OCI-LY7 (cell line): ENCODE measurements at regions of chr22 and their contacts with region 1.

Region 1: DNA sequence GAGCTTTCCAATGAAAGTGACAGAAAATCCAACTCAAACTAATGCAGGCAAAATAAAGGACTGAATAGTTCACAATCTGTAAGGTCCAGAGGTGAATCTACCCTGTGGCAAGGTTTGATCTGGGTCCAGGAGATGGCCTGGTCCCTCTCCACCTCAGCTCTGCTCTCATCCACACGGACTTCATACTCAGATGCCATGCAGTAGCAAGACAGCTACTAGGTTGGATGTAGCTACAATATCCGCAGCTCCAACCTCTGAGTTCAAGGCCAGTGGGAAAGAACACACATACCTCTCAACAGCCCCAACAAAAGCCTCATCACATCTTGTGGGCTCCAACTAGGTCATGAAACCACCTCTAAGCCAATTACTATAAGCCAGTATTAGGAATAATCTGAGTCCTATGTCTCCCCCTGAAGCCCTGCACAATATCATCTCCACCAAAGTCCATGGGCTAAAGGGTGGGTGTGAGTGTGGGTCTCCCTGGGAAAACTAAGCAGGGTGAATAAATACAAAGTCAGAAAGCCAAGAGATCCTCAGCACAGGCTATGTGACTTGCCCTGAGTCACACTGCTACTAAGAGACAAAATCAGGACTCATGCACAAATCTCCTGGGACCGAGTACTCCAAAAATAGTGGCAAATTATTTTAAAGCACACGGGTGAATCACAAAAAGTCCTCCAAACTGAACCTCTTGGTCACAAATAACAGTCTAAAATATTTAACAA is 78.8 kb downstream of the LARGE1 start:
- DNase-seq: peak; percentile 76
- H3K4me3 ChIP-seq: peak overlapping the region; percentile 60
- H3K27ac ChIP-seq: peak overlapping the region; percentile 93
- H3K4me1 ChIP-seq: peaks cover 59% of the 10 kb centered on the region
- CTCF ChIP-seq: no peak

Region 2: GRCh38 chr22:33524511-33525260 is 316.8 kb before region 1 on chr22:
- CTCF ChIA-PET with region 1: no interaction called
- POLR2A ChIA-PET with region 1: no interaction called
- intact Hi-C with region 1: loop called (anchors 5 kb)
- DNase-seq: no peak
- H3K4me3 ChIP-seq: no peak overlapping the region
- H3K27ac ChIP-seq: no peak overlapping the region
- H3K4me1 ChIP-seq: peaks cover 31% of the 10 kb centered on the region
- CTCF ChIP-seq: no peak

Region 3: GRCh38 chr22:33756508-33756949 is 84.9 kb before region 1 on chr22:
- CTCF ChIA-PET with region 1: no interaction called
- POLR2A ChIA-PET with region 1: interaction called, 3 read pairs
- intact Hi-C with region 1: loop called (anchors 5 kb)
- DNase-seq: peak; percentile 47
- H3K4me3 ChIP-seq: no peak overlapping the region
- H3K27ac ChIP-seq: no peak overlapping the region
- H3K4me1 ChIP-seq: peaks cover 7% of the 10 kb centered on the region
- CTCF ChIP-seq: peak; percentile 59

Region 4: GRCh38 chr22:33896575-33897447 is 55.4 kb after region 1 on chr22:
- CTCF ChIA-PET with region 1: no interaction called
- POLR2A ChIA-PET with region 1: interaction called, 3 read pairs
- intact Hi-C with region 1: loop called (anchors 2 kb)
- DNase-seq: peak; percentile 56
- H3K4me3 ChIP-seq: peak overlapping the region; percentile 30
- H3K27ac ChIP-seq: peak overlapping the region; percentile 72
- H3K4me1 ChIP-seq: peaks cover 45% of the 10 kb centered on the region
- CTCF ChIP-seq: no peak